CD4-positive, alpha-beta memory T cell (primary cell): ENCODE measurements at regions of chr20 and their contacts with region 1.

Region 1: DNA sequence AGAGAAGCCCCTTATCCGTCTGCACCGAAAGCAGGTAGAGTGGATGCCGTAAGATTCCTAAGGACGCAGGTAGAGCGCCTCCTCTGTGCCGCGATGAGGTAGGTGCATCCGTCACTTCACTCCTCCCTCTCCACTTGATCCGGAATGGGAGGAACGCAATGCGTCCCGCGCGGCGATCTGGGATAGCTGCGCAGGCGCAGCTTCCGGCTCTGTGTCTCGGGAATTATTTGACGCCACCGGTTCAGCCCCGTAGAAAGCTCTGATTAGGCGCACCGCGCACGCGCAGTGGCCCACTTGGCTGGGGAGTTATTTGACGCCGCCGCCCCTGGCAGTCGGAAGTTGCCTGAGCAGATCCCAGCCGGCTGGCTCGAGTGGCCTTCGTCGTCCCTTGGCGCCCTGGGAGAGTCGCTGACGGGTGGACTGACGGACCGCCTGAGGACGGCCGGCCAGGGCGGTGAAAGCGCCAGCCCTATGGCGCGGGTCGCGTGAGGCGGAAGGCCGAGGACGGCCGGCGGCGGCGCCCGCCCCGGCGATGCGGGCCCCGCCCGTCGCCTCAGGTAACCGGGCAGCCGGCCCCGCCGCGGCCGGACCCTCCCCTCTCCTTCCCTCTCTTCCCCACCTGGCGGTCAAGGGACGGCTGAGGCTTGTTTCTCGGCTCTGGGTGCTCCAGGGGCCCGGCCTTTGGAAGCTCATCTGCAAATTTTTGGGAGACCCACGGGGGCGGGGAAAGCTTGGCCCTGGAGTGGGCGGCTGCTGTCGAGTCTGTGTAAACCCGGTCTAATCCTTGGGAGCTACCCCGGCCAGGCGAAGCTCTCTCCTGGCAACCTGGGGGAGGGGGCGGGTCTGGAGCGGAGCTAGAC is at the start of gene RALGAPB:
- DNase-seq: peak; percentile 98 to 99 (median 98)
- H3K4me3 ChIP-seq: peak within 1 kb of the TSS; percentile 71 to 75
- H3K4me3 Mint-ChIP-seq: peak within 1 kb of the TSS; percentile 87 to 92 (median 90)
- H3K27ac ChIP-seq: peak within 1 kb of the TSS; percentile 88
- H3K27ac Mint-ChIP-seq: peak within 1 kb of the TSS; percentile 86 to 98 (median 94)
- H3K4me1 ChIP-seq: peaks cover 51% of the 10 kb centered on the region
- H3K4me1 Mint-ChIP-seq: peaks cover 37 to 59% (median 48%) of the 10 kb centered on the region in 4 donors
- H3K27me3 ChIP-seq: no peaks in the 10 kb centered on the region
- H3K27me3 Mint-ChIP-seq: no peaks in the 10 kb centered on the region
- total RNA-seq, gene RALGAPB: 54.8 to 57.4 TPM

Region 2: GRCh38 chr20:38434743-38435554 is 37.8 kb before region 1 on chr20 and contains the start of gene SNHG17:
- CTCF ChIA-PET with region 1: interaction called, 34 read pairs
- POLR2A ChIA-PET with region 1: interaction called, 42 read pairs
- intact Hi-C with region 1: loop called (anchors 1 kb)
- DNase-seq: peak; percentile 86 to 90 (median 87)
- H3K4me3 ChIP-seq: peak within 1 kb of the TSS; percentile 64 to 88
- H3K4me3 Mint-ChIP-seq: peak within 1 kb of the TSS; percentile 91 to 97 (median 94)
- H3K27ac ChIP-seq: peak within 1 kb of the TSS; percentile 75
- H3K27ac Mint-ChIP-seq: peak within 1 kb of the TSS; percentile 95 to 98 (median 96)
- H3K4me1 ChIP-seq: peaks cover 30% of the 10 kb centered on the region
- H3K4me1 Mint-ChIP-seq: peaks cover 20 to 49% (median 37%) of the 10 kb centered on the region in 4 donors
- H3K27me3 ChIP-seq: no peaks in the 10 kb centered on the region
- H3K27me3 Mint-ChIP-seq: peaks cover 2 to 6% of the 10 kb centered on the region in 2 donors
- total RNA-seq, gene SNHG17: 46.0 to 49.8 TPM

Region 3: DNA sequence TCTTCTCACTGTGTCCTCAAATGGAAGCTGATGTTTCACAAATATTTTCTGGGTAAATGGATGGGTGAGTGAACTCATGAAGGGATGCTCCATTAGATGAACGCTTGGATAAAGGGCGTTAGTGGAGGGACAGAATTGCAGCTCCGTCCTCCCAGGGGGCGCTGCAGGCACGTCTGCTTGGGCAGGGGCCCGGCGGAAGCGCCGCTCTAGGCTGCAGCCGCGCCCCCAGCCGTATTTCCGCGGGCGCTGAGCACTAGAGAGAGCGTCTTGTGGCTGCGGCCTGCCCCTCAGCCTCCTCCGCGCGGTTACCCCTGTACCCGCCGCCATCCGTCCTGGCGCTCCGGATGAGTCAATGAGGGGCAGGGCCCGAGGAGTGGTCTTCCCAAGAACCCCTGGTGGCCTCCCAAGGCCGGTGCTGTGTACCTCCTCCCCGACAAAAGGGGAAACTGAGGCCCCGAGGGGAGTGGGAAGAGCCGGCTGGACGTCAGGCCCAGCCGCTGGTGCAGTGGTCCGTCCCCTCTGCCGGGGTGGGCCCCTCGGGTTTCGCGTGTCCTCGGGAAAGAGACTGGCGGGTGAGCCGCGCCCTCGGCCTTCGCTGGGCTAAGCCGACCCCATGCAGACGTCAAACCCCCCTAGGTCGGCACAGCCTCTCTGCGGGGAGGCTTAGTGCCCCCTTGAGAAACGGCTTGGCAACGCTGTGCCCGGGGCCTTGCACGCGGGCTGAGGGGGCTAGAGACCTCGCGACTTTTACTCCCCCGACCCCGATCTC is 26.1 kb before region 1 on chr20:
- CTCF ChIA-PET with region 1: interaction called, 49 read pairs
- POLR2A ChIA-PET with region 1: interaction called, 62 read pairs
- intact Hi-C with region 1: loop called (anchors 1 kb)
- DNase-seq: peak; percentile 88 to 92 (median 90)
- H3K4me3 ChIP-seq: peak overlapping the region; percentile 68 to 94
- H3K4me3 Mint-ChIP-seq: peak overlapping the region; percentile 77 to 95 (median 86)
- H3K27ac ChIP-seq: peak overlapping the region; percentile 68
- H3K27ac Mint-ChIP-seq: peak overlapping the region; percentile 81 to 94 (median 89)
- H3K4me1 ChIP-seq: peaks cover 21% of the 10 kb centered on the region
- H3K4me1 Mint-ChIP-seq: peaks cover 11 to 39% (median 22%) of the 10 kb centered on the region in 4 donors
- H3K27me3 ChIP-seq: no peaks in the 10 kb centered on the region
- H3K27me3 Mint-ChIP-seq: peaks cover 0 to under 1% of the 10 kb centered on the region in 2 donors

Region 4: GRCh38 chr20:38485041-38485440 is 12.3 kb after region 1 on chr20:
- CTCF ChIA-PET with region 1: interaction called, 5 read pairs
- POLR2A ChIA-PET with region 1: interaction called, 10 read pairs
- intact Hi-C with region 1: no loop called
- DNase-seq: no peak
- H3K4me3 ChIP-seq: no peak overlapping the region
- H3K4me3 Mint-ChIP-seq: peak overlapping the region in 1 of 8 donors; percentile 20
- H3K27ac ChIP-seq: no peak overlapping the region
- H3K27ac Mint-ChIP-seq: peak overlapping the region in 1 of 7 donors; percentile 42
- H3K4me1 ChIP-seq: peaks cover 13% of the 10 kb centered on the region
- H3K4me1 Mint-ChIP-seq: peaks cover 8 to 27% (median 25%) of the 10 kb centered on the region in 4 donors
- H3K27me3 ChIP-seq: no peaks in the 10 kb centered on the region
- H3K27me3 Mint-ChIP-seq: no peaks in the 10 kb centered on the region

Region 5: DNA sequence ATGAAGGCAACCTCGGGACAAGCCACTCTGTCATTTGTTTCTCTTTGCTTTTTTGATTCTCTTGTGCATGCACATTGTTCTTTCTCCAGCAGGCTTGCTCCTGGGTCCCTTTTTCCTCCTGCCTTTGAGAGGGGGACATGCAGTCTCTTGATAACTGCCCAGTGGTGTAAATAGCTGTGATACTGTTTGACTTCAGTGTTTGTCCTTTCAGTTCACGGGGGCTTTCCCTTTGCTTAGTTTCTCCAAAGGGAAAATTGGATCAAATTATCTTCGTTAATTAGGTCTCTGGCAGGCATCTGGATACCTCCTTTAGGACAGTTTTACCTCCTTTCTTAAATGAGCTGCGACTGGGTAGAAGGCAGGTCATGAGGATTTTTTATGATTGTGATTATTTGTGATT is 41.4 kb after region 1 on chr20:
- CTCF ChIA-PET with region 1: no interaction called
- POLR2A ChIA-PET with region 1: no interaction called
- intact Hi-C with region 1: no loop called
- DNase-seq: no peak
- H3K4me3 ChIP-seq: no peak overlapping the region
- H3K4me3 Mint-ChIP-seq: no peak overlapping the region
- H3K27ac ChIP-seq: no peak overlapping the region
- H3K27ac Mint-ChIP-seq: peak overlapping the region in 2 of 7 donors; percentile 11 to 18
- H3K4me1 ChIP-seq: no peaks in the 10 kb centered on the region
- H3K4me1 Mint-ChIP-seq: peaks cover 0 to 11% (median 8%) of the 10 kb centered on the region in 4 donors
- H3K27me3 ChIP-seq: no peaks in the 10 kb centered on the region
- H3K27me3 Mint-ChIP-seq: no peaks in the 10 kb centered on the region

Region 6: DNA sequence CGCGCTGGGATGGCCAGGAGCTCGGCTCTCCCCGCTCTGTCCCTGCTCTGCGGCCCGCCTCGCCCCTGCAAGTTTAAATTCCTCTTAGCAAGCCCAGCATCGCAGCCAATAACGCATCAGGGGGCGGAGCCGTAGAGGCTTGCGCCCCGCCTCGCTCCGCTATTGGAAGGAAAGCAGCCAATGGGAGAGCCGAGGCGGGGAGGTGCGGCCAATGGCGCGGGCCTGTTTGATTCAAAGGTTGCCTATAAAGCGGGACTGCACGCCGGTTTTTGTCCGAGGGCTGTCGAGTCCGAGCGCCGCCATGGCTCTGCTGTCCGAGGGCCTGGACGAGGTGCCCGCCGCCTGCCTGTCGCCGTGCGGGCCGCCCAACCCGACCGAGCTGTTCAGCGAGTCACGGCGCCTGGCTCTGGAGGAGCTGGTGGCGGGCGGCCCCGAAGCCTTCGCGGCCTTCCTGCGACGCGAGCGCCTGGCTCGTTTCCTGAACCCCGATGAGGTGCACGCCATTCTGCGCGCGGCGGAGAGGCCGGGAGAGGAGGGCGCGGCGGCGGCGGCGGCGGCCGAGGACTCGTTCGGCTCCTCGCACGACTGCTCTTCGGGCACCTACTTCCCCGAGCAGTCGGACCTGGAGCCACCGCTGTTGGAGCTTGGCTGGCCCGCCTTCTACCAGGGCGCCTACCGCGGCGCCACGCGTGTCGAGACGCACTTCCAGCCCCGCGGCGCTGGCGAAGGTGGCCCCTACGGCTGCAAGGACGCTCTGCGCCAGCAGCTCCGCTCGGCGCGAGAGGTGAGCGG is 453.6 kb after region 1 on chr20 and contains the start of gene FAM83D:
- CTCF ChIA-PET with region 1: no interaction called
- POLR2A ChIA-PET with region 1: no interaction called
- intact Hi-C with region 1: loop called (anchors 2 kb)
- DNase-seq: peak; percentile 93 to 96 (median 95)
- H3K4me3 ChIP-seq: peak within 1 kb of the TSS; percentile 57 to 70
- H3K4me3 Mint-ChIP-seq: peak within 1 kb of the TSS; percentile 81 to 87 (median 82)
- H3K27ac ChIP-seq: peak within 1 kb of the TSS; percentile 51
- H3K27ac Mint-ChIP-seq: peak within 1 kb of the TSS; percentile 32 to 93 (median 66)
- H3K4me1 ChIP-seq: peaks cover 33% of the 10 kb centered on the region
- H3K4me1 Mint-ChIP-seq: peaks cover 21 to 37% (median 27%) of the 10 kb centered on the region in 4 donors
- H3K27me3 ChIP-seq: no peaks in the 10 kb centered on the region
- H3K27me3 Mint-ChIP-seq: no peaks in the 10 kb centered on the region
- total RNA-seq, gene FAM83D: 1.4 to 1.5 TPM